Esophagus muscularis mucosa (tissue), 4 donors: ENCODE measurements at regions of chr20 and their contacts with region 1.

Region 1: GRCh38 chr20:21767739-21768223 is 62.3 kb downstream of the PAX1 start:
- DNase-seq: no peak
- H3K4me3 ChIP-seq: no peak overlapping the region
- H3K27ac ChIP-seq: no peak overlapping the region
- H3K4me1 ChIP-seq: no peaks in the 10 kb centered on the region
- H3K27me3 ChIP-seq: peaks cover 0 to 11% (median 0%) of the 10 kb centered on the region in 4 donors
- CTCF ChIP-seq: no peak
- EP300 ChIP-seq: no peak
- POLR2A ChIP-seq: no peak

Region 2: GRCh38 chr20:21820688-21821087 is 52.9 kb after region 1 on chr20:
- intact Hi-C with region 1: loop called (anchors 5 kb)
- DNase-seq: no peak
- H3K4me3 ChIP-seq: no peak overlapping the region
- H3K27ac ChIP-seq: no peak overlapping the region
- H3K4me1 ChIP-seq: no peaks in the 10 kb centered on the region
- H3K27me3 ChIP-seq: no peaks in the 10 kb centered on the region
- CTCF ChIP-seq: no peak
- EP300 ChIP-seq: no peak
- POLR2A ChIP-seq: no peak